Dendritic cell treated with granulocyte-macrophage colony-stimulating factor and Interleukin-4, amounts not matched to agents 40 ng/mL and 50 ng/mL, for 4 days (primary cell): ENCODE measurements at regions of chr2 and their contacts with region 1.

Region 1: DNA sequence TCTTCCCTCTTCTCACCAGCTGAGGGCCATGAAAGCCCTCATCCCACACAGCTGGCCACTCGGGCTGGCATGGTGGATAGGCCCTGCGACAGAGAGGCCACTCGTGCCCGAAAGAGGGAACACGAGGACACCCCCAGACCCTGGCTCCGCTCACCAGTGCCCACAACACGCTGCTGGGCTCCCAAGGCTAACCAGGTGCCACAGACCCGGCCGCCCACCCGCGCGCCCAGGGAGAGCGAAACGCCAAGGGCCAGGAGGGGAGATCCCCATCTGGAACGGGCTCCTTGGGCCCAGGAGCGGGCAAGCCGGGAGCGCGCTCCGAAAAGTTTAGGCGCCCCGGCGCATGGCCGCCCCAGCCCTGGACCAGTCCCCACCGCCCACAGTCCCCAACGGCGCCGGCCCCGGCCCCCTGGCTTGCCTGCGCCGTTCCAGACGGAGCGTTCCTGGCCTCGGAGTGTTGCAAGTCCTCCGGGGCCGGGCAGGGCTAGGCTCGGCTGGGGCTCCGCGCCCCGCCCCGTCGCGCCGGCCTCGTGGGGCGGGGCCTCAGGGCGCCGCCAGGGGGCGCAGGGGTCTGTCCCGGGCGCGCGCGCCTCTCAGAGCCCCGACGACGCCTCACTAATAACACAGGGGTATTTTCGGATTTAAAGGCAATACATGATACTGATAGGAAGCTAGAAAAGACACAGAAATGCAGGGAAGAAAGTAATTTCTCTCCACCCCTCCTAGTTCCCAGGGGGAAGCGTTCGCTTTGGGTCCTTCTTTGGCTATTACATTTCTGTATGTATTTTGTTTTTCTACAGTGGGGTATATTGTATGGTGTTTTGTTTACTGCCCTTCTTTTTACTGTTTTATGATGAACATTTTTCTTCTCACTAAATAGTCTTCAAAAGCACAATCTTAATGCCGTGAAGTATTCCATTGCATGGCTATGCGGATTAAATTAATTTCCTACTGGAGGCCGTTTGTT is at the start of gene TMBIM1:
- H3K4me3 Mint-ChIP-seq: peak within 1 kb of the TSS; percentile 77
- H3K27ac Mint-ChIP-seq: peak within 1 kb of the TSS; percentile 99
- H3K4me1 Mint-ChIP-seq: peaks cover 52% of the 10 kb centered on the region
- H3K27me3 Mint-ChIP-seq: peaks cover 1% of the 10 kb centered on the region

Region 2: DNA sequence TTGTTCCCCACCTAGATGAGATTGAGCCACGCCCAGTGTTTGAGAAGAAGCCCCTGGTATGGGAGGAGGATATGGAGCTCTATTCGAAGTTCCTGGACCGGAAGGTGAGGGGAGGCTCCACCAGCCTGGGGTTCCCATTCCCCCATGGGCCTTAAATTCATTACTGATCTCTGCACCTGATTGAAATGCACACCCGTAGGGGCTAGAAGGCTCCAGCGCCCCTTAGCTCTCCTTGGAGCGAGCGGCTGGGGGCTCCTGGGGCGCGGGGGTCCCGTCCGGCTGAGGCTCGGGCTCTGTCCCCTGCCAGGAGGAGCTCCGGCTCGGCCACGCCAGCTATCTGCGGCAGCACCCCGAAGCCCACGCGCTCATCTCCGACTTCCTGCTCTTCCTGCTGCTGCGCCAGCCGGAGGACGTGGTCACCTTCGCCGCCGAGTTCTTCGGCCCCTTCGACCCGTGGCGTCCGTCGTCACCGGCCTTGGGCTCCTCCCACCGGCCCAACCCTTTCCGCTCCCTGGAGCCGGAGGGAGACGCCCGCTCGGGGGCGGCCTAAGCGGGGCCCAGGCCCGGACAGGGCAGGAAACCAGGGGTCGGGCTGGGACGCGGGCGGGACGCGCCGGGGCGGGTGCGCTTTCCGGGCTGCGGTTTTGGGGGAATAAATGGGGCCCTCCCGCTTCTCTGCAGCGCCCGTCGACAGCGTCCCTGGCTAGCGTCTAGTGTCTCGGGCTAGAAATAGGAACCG is 75.3 kb after region 1 on chr2:
- intact Hi-C with region 1: loop called (anchors 5 kb)
- H3K4me3 Mint-ChIP-seq: peak overlapping the region; percentile 80
- H3K27ac Mint-ChIP-seq: peak overlapping the region; percentile 98
- H3K4me1 Mint-ChIP-seq: peaks cover 80% of the 10 kb centered on the region
- H3K27me3 Mint-ChIP-seq: no peaks in the 10 kb centered on the region